Mammary epithelial cell (primary cell): ENCODE measurements at regions of chr6 and their contacts with region 1.

Region 1: GRCh38 chr6:42453031-42453653 is 1.4 kb upstream of the TRERF1 start:
- DNase-seq: peak; percentile 78
- H3K4me3 ChIP-seq: peak overlapping the region; percentile 56 to 83 (median 59)
- H3K27ac ChIP-seq: no peak overlapping the region
- H3K4me1 ChIP-seq: peaks cover 22% of the 10 kb centered on the region
- H3K27me3 ChIP-seq: no peaks in the 10 kb centered on the region
- CTCF ChIP-seq: no peak

Region 2: DNA sequence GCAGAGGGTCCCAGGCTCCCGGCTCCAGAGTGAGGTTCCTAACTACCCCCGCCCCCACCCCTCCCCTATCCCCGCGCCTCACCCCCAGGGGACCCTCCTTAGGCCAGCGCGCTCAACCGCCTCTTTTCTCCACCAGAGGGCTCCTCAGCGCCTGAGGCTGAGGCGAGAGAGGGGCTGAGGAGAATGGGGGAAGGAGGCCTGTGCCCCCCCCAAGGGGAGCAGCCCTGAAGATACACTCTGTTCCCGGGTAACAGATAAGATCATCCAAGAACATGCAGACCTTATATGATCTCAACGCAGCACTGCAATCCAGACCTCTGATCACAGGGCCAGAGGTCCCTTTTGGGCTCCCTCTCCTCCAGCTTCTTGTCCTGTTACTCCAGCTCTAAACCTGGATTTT is 192.2 kb before region 1 on chr6:
- CTCF ChIA-PET with region 1: no interaction called
- dilution Hi-C with region 1: no loop called
- in situ Hi-C with region 1: no loop called
- intact Hi-C with region 1: loop called (anchors 5 kb)
- DNase-seq: no peak
- H3K4me3 ChIP-seq: no peak overlapping the region
- H3K27ac ChIP-seq: no peak overlapping the region
- H3K4me1 ChIP-seq: no peaks in the 10 kb centered on the region
- H3K27me3 ChIP-seq: no peaks in the 10 kb centered on the region
- CTCF ChIP-seq: peak in 1 of 2 donors; percentile 58

Region 3: GRCh38 chr6:42338663-42339218 is 114.4 kb before region 1 on chr6:
- CTCF ChIA-PET with region 1: no interaction called
- dilution Hi-C with region 1: no loop called
- in situ Hi-C with region 1: no loop called
- intact Hi-C with region 1: loop called (anchors 5 kb)
- DNase-seq: peak; percentile 96
- H3K4me3 ChIP-seq: no peak overlapping the region
- H3K27ac ChIP-seq: peak overlapping the region; percentile 82
- H3K4me1 ChIP-seq: peaks cover 28% of the 10 kb centered on the region
- H3K27me3 ChIP-seq: no peaks in the 10 kb centered on the region
- CTCF ChIP-seq: no peak

Region 4: DNA sequence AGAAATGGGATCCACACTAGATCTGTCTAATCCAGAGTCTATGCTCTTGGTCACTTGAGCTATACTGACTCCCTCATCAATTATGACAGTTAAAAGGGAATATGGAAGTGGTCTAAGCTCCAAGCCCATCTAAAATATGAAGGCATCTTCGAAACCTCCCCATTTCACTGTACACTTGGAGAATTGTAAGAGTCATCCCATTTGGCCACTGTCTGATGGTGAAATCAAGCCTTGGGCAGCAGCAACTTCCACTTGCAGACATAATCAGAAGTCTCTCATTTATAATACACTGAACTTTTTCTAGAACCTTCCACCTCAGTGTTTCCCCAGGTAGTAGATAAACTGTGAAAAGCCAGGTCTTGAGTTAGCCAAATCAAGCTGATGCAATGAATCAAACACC is 84.4 kb after region 1 on chr6:
- CTCF ChIA-PET with region 1: no interaction called
- dilution Hi-C with region 1: loop called (anchors 5 kb)
- in situ Hi-C with region 1: no loop called
- intact Hi-C with region 1: no loop called
- DNase-seq: no peak
- H3K4me3 ChIP-seq: no peak overlapping the region
- H3K27ac ChIP-seq: no peak overlapping the region
- H3K4me1 ChIP-seq: no peaks in the 10 kb centered on the region
- H3K27me3 ChIP-seq: no peaks in the 10 kb centered on the region
- CTCF ChIP-seq: no peak

Region 5: DNA sequence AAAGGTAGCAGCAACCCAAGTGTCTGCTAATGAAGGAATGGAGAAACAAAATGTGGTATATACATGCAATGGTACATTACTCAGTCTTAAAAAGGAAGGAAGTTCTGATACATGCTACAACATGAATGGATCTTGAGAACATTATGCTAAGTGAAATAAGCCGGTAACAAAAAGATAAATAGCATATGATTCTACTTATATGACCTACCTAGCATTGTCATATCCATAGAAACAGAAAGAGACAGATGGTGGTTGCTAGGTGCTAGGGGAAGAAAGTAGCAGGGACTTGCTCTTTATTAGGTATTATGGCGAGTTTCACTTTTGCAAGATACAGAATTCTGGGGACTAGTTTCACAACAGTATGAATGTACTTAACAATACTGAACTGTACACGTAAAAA is 157.3 kb after region 1 on chr6:
- CTCF ChIA-PET with region 1: no interaction called
- dilution Hi-C with region 1: no loop called
- in situ Hi-C with region 1: no loop called
- intact Hi-C with region 1: no loop called
- DNase-seq: no peak
- H3K4me3 ChIP-seq: no peak overlapping the region
- H3K27ac ChIP-seq: no peak overlapping the region
- H3K4me1 ChIP-seq: no peaks in the 10 kb centered on the region
- H3K27me3 ChIP-seq: no peaks in the 10 kb centered on the region
- CTCF ChIP-seq: no peak

Region 6: GRCh38 chr6:43516697-43517504 is 1063.8 kb after region 1 on chr6 and contains the starts of genes POLR1C and YIPF3:
- CTCF ChIA-PET with region 1: no interaction called
- dilution Hi-C with region 1: no loop called
- in situ Hi-C with region 1: no loop called
- intact Hi-C with region 1: no loop called
- DNase-seq: peak; percentile 97
- H3K4me3 ChIP-seq: peak within 1 kb of the TSS; percentile 76 to 98 (median 93)
- H3K27ac ChIP-seq: peak within 1 kb of the TSS; percentile 91
- H3K4me1 ChIP-seq: peaks cover 17% of the 10 kb centered on the region
- H3K27me3 ChIP-seq: no peaks in the 10 kb centered on the region
- CTCF ChIP-seq: no peak
- total RNA-seq, gene POLR1C: 28.2 to 50.5 TPM
- total RNA-seq, gene YIPF3: 71.2 to 83.8 TPM

Region 7: GRCh38 chr6:43758617-43759050 is 1305.5 kb after region 1 on chr6:
- CTCF ChIA-PET with region 1: no interaction called
- dilution Hi-C with region 1: no loop called
- in situ Hi-C with region 1: no loop called
- intact Hi-C with region 1: no loop called
- DNase-seq: no peak
- H3K4me3 ChIP-seq: no peak overlapping the region
- H3K27ac ChIP-seq: no peak overlapping the region
- H3K4me1 ChIP-seq: no peaks in the 10 kb centered on the region
- H3K27me3 ChIP-seq: no peaks in the 10 kb centered on the region
- CTCF ChIP-seq: peak; percentile 27 to 65